Motor neuron (in vitro differentiated cells): ENCODE measurements at regions of chr19 and their contacts with region 1.

Region 1: GRCh38 chr19:39532233-39533002 is at the start of gene EID2B:
- ATAC-seq: peak; percentile 92 to 98 (median 96)
- H3K4me3 ChIP-seq: peak within 1 kb of the TSS; percentile 57 to 93 (median 88)
- H3K27ac ChIP-seq: peak within 1 kb of the TSS; percentile 79 to 86
- H3K4me1 ChIP-seq: peaks cover 5 to 6% of the 10 kb centered on the region in 2 donors
- total RNA-seq, gene EID2B: 6.2 to 14.2 (median 10.4) TPM

Region 2: DNA sequence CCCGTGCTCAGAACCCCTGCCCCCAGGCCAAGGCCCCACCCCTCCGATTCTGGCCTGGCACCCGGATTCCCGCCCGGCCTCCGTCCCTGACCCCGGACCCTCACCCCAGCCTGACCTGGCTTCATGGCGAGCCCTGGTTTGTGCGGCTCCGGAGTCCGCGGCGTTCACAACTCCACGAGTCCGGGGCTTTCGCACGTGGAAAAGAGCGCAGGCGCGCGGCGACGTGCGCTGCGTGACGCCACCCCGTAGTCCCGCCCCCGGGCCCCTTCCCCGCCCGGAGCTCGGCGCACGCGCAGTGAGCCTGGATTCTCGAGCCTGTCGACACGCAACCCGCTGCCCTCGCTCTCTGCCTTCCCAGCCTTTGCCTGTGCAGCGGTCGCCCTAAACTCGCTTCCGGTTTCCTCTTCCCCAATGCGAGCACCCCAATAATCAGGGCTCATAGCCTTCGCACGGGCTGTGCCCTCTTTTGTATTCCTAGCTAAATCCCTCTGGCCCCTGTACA is 313.8 kb after region 1 on chr19 and contains the start of gene FBL:
- in situ Hi-C with region 1: loop called in 1 of 9 experiments (anchors 25 kb)
- ATAC-seq: peak; percentile 74 to 96 (median 92)
- H3K4me3 ChIP-seq: peak within 1 kb of the TSS; percentile 49 to 87 (median 56)
- H3K27ac ChIP-seq: peak within 1 kb of the TSS; percentile 89 to 90
- H3K4me1 ChIP-seq: peaks cover 21 to 22% of the 10 kb centered on the region in 2 donors
- total RNA-seq, gene FBL: 67.4 to 311 (median 110) TPM